ENCODE measurements at regions of chr11 and their contacts with region 1.

Region 1: GRCh38 chr11:65225279-65226102 is 36.3 kb upstream of the POLA2 start:
- DNase-seq: peak; percentile 87
- H3K4me3 ChIP-seq: peak overlapping the region; percentile 29 to 40; a peak in 3 of 4 replicates
- H3K27ac ChIP-seq: no peak overlapping the region
- H3K4me1 ChIP-seq: peaks cover 2 to 9% of the 10 kb centered on the region in 2 experiments; a peak in 2 of 4 replicates
- H3K27me3 ChIP-seq: no peaks in the 10 kb centered on the region
- CTCF ChIP-seq: peak; percentile 66
- EP300 ChIP-seq: no peak
- RAD21 ChIP-seq: peak; percentile 62

Region 2: DNA sequence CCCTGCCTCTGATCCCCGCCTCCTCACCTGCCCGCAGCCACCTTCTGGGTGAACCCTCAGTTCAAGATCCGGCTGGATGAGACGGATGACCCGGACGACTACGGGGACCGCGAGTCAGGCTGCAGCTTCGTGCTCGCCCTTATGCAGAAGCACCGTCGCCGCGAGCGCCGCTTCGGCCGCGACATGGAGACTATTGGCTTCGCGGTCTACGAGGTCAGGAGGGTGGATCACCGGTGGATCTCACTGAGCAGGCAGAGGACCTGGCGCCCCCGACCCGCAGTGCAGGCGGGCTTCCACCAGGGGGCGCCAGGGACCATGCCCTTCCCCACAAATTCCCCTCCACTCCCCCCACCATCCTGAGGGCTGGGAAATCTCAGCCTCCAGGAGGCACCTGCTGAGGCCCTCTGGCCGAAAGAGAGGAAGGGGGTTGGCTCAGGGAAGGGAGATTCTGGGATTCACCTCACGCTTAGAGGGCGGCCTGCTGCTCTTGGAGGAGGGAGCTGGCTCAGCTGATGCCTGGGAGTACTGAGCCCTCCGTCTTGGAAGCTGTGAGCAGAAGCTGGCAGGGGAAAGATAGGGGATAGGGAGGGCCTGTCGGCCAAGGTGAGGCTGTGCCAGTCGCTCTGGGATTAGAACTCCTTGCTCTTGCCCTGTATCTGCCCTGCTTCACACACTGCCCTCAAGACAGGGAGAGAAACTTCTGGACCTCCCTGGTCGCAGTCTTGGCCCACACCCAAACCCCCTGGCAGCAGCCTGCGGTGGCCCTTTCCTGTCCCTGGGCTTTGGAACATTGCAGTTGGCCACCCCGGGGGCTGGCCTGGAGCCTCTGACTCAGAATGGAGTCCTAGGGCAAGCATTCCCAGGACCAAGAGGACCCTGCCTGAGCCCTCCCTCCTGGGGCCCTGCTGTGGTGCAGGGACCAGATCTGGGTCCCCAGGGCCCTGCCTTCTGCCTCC is 20.6 kb before region 1 on chr11:
- CTCF ChIA-PET with region 1: interaction called, 42 read pairs
- POLR2A ChIA-PET with region 1: interaction called, 3 read pairs
- DNase-seq: peak; percentile 92
- H3K4me3 ChIP-seq: no peak overlapping the region
- H3K27ac ChIP-seq: no peak overlapping the region
- H3K4me1 ChIP-seq: no peaks in the 10 kb centered on the region
- H3K27me3 ChIP-seq: no peaks in the 10 kb centered on the region
- CTCF ChIP-seq: peak; percentile 85
- EP300 ChIP-seq: no peak
- RAD21 ChIP-seq: peak; percentile 70

Region 3: GRCh38 chr11:65236194-65237059 is 10.9 kb after region 1 on chr11:
- CTCF ChIA-PET with region 1: interaction called, 12 read pairs
- POLR2A ChIA-PET with region 1: no interaction called
- DNase-seq: no peak
- H3K4me3 ChIP-seq: no peak overlapping the region
- H3K27ac ChIP-seq: no peak overlapping the region
- H3K4me1 ChIP-seq: no peaks in the 10 kb centered on the region
- H3K27me3 ChIP-seq: no peaks in the 10 kb centered on the region
- CTCF ChIP-seq: no peak
- EP300 ChIP-seq: no peak
- RAD21 ChIP-seq: no peak

Region 4: DNA sequence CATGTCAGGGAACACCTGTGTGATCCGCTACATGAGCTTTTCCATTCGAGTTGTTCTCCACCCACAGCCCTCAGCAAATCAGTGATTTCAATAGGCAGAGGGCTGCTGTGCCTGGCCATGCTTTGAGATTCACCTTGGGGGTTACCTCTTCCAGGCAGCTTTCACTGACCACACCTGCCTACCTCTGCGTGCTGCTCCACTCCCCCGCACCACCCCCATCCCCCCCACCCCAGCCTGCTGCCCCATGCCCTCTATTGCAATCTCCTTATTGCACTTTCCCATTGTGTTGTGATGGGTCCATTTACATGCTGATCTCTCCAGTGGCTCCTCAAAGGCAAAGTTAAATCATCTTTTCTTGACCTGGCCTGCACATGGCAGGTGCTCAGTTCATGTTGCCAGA is 18.3 kb after region 1 on chr11:
- CTCF ChIA-PET with region 1: interaction called, 21 read pairs
- POLR2A ChIA-PET with region 1: no interaction called
- DNase-seq: no peak
- H3K4me3 ChIP-seq: no peak overlapping the region
- H3K27ac ChIP-seq: no peak overlapping the region
- H3K4me1 ChIP-seq: no peaks in the 10 kb centered on the region
- H3K27me3 ChIP-seq: no peaks in the 10 kb centered on the region
- CTCF ChIP-seq: no peak
- EP300 ChIP-seq: no peak
- RAD21 ChIP-seq: no peak

Region 5: DNA sequence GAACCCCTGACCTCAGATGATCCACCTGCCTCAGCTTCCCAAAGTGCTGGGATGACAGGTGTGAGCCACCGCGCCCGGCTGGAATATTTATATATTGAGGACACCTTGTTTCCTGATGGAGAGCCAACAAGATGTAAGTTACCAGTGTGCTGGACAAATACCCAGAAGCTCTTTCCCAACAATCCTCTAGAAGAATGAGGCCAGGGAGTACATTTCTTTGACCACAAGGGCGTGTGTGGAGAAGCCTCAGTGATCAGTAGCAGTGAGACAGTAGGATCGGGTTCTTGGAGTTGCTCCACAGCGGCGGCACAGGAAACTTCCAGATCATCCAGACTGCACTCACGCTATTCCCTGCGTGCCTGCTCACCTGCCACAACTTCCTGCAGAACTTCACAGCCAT is 26.0 kb after region 1 on chr11:
- CTCF ChIA-PET with region 1: interaction called, 20 read pairs
- POLR2A ChIA-PET with region 1: no interaction called
- DNase-seq: no peak
- H3K4me3 ChIP-seq: no peak overlapping the region
- H3K27ac ChIP-seq: no peak overlapping the region
- H3K4me1 ChIP-seq: no peaks in the 10 kb centered on the region
- H3K27me3 ChIP-seq: no peaks in the 10 kb centered on the region
- CTCF ChIP-seq: no peak
- EP300 ChIP-seq: no peak
- RAD21 ChIP-seq: no peak

Measured in SK-N-SH (cell line).